IMR-90 (cell line): ENCODE measurements at regions of chr17 and their contacts with region 1.

Region 1: GRCh38 chr17:8222630-8223356 is 12.4 kb upstream of the AURKB start:
- DNase-seq: peak; percentile 93
- ATAC-seq: peak; percentile 40
- H3K4me3 ChIP-seq: peak overlapping the region; percentile 62
- H3K27ac ChIP-seq: peak overlapping the region; percentile 85
- H3K4me1 ChIP-seq: peaks cover 9% of the 10 kb centered on the region
- H3K27me3 ChIP-seq: no peaks in the 10 kb centered on the region
- CTCF ChIP-seq: no peak
- POLR2A ChIP-seq: peak; percentile 77; the same call in 1 of the 2 replicates
- RAD21 ChIP-seq: no peak

Region 2: DNA sequence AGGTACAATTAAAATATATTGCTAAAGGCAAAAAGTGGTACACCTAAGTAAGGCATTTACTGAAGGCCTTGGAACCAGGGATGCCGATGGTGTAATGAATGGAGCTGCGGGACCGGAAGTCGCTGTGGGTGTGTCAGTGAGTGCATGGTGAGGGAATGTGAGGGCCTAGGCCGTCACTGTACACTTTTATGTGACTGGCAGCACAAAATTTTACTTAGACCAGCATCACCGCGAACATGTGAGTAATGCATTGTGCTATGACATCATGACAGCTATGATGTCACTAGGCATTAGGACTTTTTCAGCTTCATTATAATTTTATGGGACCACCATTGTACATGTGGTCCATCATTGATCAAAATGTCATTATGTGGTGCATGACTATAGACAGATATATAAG is 169.2 kb before region 1 on chr17:
- CTCF ChIA-PET with region 1: no interaction called
- POLR2A ChIA-PET with region 1: no interaction called
- dilution Hi-C with region 1: no loop called
- in situ Hi-C with region 1: no loop called
- intact Hi-C with region 1: no loop called
- DNase-seq: no peak
- ATAC-seq: no peak
- H3K4me3 ChIP-seq: no peak overlapping the region
- H3K27ac ChIP-seq: no peak overlapping the region
- H3K4me1 ChIP-seq: peaks cover 2% of the 10 kb centered on the region; the same call in 1 of the 2 replicates
- H3K27me3 ChIP-seq: peaks cover 33% of the 10 kb centered on the region
- CTCF ChIP-seq: no peak
- POLR2A ChIP-seq: no peak
- RAD21 ChIP-seq: no peak

Region 3: GRCh38 chr17:8138672-8139371 is 84.0 kb before region 1 on chr17:
- CTCF ChIA-PET with region 1: interaction called, 4 read pairs
- POLR2A ChIA-PET with region 1: no interaction called
- dilution Hi-C with region 1: no loop called
- in situ Hi-C with region 1: no loop called
- intact Hi-C with region 1: loop called (anchors 5 kb)
- DNase-seq: peak; percentile 98
- ATAC-seq: peak; percentile 86
- H3K4me3 ChIP-seq: peak overlapping the region; percentile 55
- H3K27ac ChIP-seq: peak overlapping the region; percentile 3; the same call in 1 of the 2 replicates
- H3K4me1 ChIP-seq: peaks cover 4% of the 10 kb centered on the region
- H3K27me3 ChIP-seq: no peaks in the 10 kb centered on the region
- CTCF ChIP-seq: peak; percentile 95
- POLR2A ChIP-seq: peak; percentile 91
- RAD21 ChIP-seq: peak; percentile 70

Region 4: GRCh38 chr17:8204761-8205555 is 17.8 kb before region 1 on chr17:
- CTCF ChIA-PET with region 1: no interaction called
- POLR2A ChIA-PET with region 1: interaction called, 3 read pairs
- dilution Hi-C with region 1: no loop called
- in situ Hi-C with region 1: no loop called
- intact Hi-C with region 1: loop called (anchors 1 kb)
- DNase-seq: no peak
- ATAC-seq: no peak
- H3K4me3 ChIP-seq: no peak overlapping the region
- H3K27ac ChIP-seq: no peak overlapping the region
- H3K4me1 ChIP-seq: 0 out of 2 replicates have a peak, but pooled peaks cover 5% of the 10 kb centered on the region
- H3K27me3 ChIP-seq: no peaks in the 10 kb centered on the region
- CTCF ChIP-seq: no peak
- POLR2A ChIP-seq: no peak
- RAD21 ChIP-seq: no peak

Region 5: DNA sequence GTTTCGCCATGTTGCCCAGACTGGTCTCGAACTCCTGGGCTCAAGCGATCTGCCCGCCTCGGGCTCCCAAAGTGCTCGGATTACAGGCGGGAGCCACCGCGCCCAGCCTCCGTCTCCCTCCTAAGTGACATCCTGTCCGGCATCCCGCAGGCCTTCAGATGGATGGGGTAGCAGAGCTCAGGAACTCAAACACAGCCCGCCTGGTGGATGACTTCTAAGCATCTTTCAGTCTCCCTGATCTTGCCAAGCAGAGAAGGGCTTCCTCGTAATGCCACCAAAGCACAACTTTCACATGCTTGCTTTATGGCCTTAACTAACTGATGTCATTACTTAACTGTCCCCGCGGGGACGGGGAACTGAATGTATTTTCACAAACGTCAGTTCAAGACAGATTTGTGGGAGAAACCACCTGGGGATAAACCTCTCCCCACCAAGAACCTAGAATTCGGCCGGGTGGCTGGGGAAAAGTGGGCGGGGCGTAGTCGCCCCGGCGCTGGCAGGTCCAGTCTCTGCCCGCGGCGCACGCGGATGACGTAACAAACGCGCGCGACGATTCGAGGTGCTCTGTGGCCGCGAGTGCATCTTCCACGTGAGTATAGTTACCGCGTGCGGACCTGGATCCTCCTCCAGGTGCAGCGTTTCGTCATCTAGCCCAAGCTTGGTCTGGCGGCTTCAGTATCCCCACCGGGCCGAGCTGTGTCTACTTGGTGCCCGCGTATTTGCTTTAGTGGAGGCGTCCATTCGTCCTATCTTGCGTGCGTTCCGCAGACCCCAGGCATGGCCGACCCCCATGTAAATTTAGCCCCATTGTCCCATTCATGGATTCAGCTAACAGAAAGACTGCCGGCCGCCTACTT is 26.2 kb after region 1 on chr17 and contains the start of gene PFAS:
- CTCF ChIA-PET with region 1: no interaction called
- POLR2A ChIA-PET with region 1: no interaction called
- dilution Hi-C with region 1: no loop called
- in situ Hi-C with region 1: no loop called
- intact Hi-C with region 1: loop called (anchors 1 kb)
- DNase-seq: peak; percentile 89
- ATAC-seq: peak; percentile 74
- H3K4me3 ChIP-seq: peak within 1 kb of the TSS; percentile 76
- H3K27ac ChIP-seq: peak within 1 kb of the TSS; percentile 80
- H3K4me1 ChIP-seq: no peaks in the 10 kb centered on the region; the same call in 1 of the 2 replicates
- H3K27me3 ChIP-seq: no peaks in the 10 kb centered on the region
- CTCF ChIP-seq: no peak
- POLR2A ChIP-seq: peak; percentile 54
- RAD21 ChIP-seq: no peak
- total RNA-seq, gene PFAS: 22.2 and 26.2 TPM in 2 replicates

Region 6: GRCh38 chr17:8275421-8276290 is 52.9 kb after region 1 on chr17:
- CTCF ChIA-PET with region 1: no interaction called
- POLR2A ChIA-PET with region 1: no interaction called
- dilution Hi-C with region 1: no loop called
- in situ Hi-C with region 1: no loop called
- intact Hi-C with region 1: no loop called
- DNase-seq: peak; percentile 34
- ATAC-seq: peak; percentile 51
- H3K4me3 ChIP-seq: no peak overlapping the region
- H3K27ac ChIP-seq: no peak overlapping the region
- H3K4me1 ChIP-seq: no peaks in the 10 kb centered on the region; the same call in 1 of the 2 replicates
- H3K27me3 ChIP-seq: no peaks in the 10 kb centered on the region
- CTCF ChIP-seq: no peak
- POLR2A ChIP-seq: no peak
- RAD21 ChIP-seq: no peak